ENCODE measurements at regions of chr5 and their contacts with region 1.

Region 1: DNA sequence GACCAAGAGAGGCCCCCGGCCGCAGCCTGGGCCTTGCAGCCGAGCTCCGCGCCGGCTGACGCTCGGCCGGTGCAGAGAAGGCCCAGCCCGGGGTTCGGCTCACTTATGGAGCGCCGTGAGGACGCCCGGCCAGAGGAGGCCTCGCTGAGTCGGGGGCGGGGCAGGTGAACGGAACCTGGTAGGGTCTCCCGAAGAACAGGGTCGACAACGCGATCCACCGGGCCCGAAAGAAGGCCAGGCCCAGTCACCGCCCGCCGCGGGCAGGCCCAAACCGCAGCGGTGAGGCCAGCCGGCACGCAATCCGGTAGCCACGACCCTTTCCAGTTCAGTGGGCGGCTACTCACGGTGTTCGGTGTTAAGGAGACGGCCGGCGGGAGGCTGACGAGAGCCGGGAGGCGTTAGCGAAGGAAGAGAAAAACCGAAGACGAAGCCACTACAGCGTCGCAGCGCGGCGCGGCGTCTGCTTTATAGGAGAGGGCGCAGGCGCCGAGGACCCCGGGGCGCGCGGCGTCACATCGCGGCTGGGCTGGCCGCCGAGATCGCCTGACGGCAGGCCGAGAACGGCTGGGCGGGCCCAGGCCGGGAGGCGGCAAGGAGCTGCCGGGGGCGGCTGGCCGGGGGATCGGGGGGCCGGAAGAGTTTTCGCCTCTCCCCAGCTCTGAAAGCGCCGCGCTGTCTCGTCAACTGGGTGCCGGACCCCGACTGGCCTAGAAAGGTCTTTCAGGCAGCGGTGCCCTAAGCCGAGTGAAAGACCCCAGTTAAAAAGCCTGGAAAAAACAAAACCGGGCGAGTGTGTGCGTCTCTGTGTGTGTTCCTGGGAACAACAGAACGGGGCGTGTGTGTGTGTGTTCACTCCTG is at the start of gene SKP1:
- DNase-seq: peak; percentile 58 to 88
- ATAC-seq: peak; percentile 84 to 89
- H3K4me3 ChIP-seq: peak within 1 kb of the TSS; percentile 89
- H3K27ac ChIP-seq: peak within 1 kb of the TSS; percentile 94 to 98
- H3K4me1 ChIP-seq: peaks cover 19% of the 10 kb centered on the region; the same call in 2 of the 3 replicates
- CTCF ChIP-seq: no peak
- EP300 ChIP-seq: no peak
- POLR2A ChIP-seq: peak; percentile 98
- RAD21 ChIP-seq: no peak
- polyA plus RNA-seq, gene SKP1: 608 and 776 TPM in 2 replicates

Region 2: DNA sequence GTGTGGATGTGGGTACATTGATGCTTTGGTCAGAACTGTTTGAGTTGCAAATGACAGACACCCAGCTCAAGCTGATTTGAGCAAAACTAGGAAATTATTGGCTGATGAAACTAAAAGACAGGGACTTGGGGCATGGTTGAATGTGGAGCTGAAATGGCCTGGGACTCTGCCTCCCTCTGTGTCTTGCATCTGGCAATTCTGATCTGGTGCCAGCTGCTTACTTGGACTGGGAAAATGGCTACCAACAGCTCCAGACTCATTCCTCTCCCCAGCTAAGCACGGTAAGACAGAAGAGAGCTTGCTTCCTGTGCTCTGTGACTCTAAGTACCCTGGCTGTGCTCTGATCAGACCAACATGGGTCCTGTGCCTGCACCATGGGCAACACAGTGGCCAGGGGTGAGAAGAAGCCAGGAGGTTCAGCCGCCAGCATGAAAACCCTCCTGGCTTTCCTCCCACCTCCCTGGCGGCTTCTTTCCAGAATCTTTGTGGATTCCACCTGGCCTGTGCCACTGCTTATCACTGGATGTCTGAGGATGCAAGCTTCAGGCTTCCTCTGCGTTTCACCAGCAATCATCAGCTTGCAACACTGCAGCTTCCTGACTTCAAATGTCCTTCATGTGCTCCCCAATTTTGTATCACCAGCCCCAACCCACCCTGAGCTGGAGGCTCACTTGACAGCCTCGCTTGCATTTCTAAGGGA is 252.4 kb before region 1 on chr5:
- CTCF ChIA-PET with region 1: no interaction called
- POLR2A ChIA-PET with region 1: no interaction called
- DNase-seq: no peak
- ATAC-seq: peak in 1 of 2 experiments; percentile 25; a peak in 1 of 6 replicates
- H3K4me3 ChIP-seq: no peak overlapping the region
- H3K27ac ChIP-seq: no peak overlapping the region
- H3K4me1 ChIP-seq: peaks cover 19% of the 10 kb centered on the region
- CTCF ChIP-seq: no peak
- EP300 ChIP-seq: no peak
- POLR2A ChIP-seq: no peak
- RAD21 ChIP-seq: no peak

Region 3: DNA sequence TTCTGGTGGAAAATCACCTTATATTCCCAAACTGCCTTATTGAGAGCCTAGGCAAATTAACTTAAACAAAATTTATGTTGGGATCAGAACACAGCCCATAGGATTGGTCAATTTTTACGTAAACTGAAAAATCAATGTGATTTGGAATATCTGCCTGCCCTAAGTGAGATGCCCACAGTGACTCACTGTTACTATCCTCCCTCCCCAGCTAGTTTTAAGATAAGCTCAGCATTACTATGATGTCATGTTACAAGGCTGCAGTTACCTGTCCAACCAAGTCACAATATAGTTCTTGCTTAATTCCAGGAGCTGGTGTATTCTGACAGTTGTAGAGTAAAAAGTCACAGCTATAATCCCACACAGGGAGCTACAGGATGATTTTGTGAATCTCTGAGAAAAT is 23.1 kb before region 1 on chr5:
- CTCF ChIA-PET with region 1: no interaction called
- POLR2A ChIA-PET with region 1: interaction called, 17 read pairs
- DNase-seq: no peak
- ATAC-seq: no peak
- H3K4me3 ChIP-seq: no peak overlapping the region
- H3K27ac ChIP-seq: no peak overlapping the region
- H3K4me1 ChIP-seq: no peaks in the 10 kb centered on the region
- CTCF ChIP-seq: no peak
- EP300 ChIP-seq: no peak
- POLR2A ChIP-seq: no peak
- RAD21 ChIP-seq: no peak

Region 4: DNA sequence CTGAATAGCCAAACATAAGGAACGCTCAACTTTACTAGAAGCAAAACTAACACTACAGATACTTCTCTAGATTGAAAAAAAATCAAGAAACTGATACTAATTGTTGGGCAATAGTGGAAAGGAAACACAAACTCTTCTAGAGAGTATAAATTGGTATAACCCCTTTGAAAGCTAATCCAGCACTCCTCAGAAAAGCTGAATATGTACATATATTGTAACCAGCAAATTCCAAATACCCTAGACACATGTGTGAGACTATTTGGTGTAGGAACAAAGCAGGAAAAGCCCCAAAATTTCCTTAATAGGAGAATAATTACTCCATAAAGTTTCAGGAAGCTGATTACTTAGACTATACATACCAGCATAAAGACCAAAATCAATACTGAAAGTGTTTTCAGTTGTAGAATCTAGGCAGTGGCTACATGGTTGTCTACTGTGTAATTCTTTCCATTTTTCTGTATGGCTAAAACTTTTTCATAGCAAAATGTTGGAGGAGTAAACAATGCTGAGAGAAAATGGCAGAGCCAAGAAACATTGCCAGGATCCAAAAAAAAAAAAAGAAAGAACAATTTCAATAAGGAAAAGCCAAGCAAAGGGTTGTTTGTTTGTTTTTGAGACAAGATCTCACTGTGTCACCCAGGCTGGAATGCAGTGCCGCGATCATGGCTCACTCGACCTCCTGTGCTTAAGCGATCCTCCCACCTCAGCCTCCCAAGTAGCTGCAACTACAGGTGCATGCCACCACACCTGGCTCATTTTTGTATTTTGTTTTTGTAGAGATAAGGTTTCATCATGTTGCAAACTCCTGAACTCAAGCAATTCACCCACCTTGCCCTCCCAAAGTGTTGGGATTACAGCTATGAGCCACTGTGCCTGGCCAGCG is 15.0 kb before region 1 on chr5:
- CTCF ChIA-PET with region 1: interaction called, 8 read pairs
- POLR2A ChIA-PET with region 1: interaction called, 10 read pairs
- DNase-seq: no peak
- ATAC-seq: no peak
- H3K4me3 ChIP-seq: no peak overlapping the region
- H3K27ac ChIP-seq: no peak overlapping the region
- H3K4me1 ChIP-seq: no peaks in the 10 kb centered on the region
- CTCF ChIP-seq: no peak
- EP300 ChIP-seq: no peak
- POLR2A ChIP-seq: no peak
- RAD21 ChIP-seq: no peak

Region 5: GRCh38 chr5:134240421-134240962 is 63.8 kb after region 1 on chr5:
- CTCF ChIA-PET with region 1: interaction called, 3 read pairs
- POLR2A ChIA-PET with region 1: interaction called, 23 read pairs
- DNase-seq: peak in 1 of 2 experiments; percentile 58
- ATAC-seq: peak; percentile 60 to 72; a peak in 4 of 6 replicates
- H3K4me3 ChIP-seq: no peak overlapping the region
- H3K27ac ChIP-seq: peak overlapping the region; percentile 58 to 71
- H3K4me1 ChIP-seq: peaks cover 31% of the 10 kb centered on the region
- CTCF ChIP-seq: no peak
- EP300 ChIP-seq: no peak
- POLR2A ChIP-seq: no peak
- RAD21 ChIP-seq: no peak